Right cardiac atrium (tissue), 5 donors: ENCODE measurements at regions of chr13 and their contacts with region 1.

Region 1: GRCh38 chr13:80342471-80343380 is 1.8 kb upstream of the SPRY2 start:
- DNase-seq: peak; percentile 83 to 94 (median 94)
- ATAC-seq: peak; percentile 58 to 66
- H3K4me3 ChIP-seq: peak overlapping the region; percentile 94
- H3K27ac ChIP-seq: peak overlapping the region; percentile 99
- H3K4me1 ChIP-seq: no peaks in the 10 kb centered on the region
- H3K27me3 ChIP-seq: no peaks in the 10 kb centered on the region

Region 2: GRCh38 chr13:79679334-79679733 is 663.4 kb before region 1 on chr13:
- intact Hi-C with region 1: loop called in 2 of 4 experiments (anchors 10 kb)
- DNase-seq: peak; percentile 63 to 87 (median 65)
- ATAC-seq: peak; percentile 53 to 74
- H3K4me3 ChIP-seq: no peak overlapping the region
- H3K27ac ChIP-seq: no peak overlapping the region
- H3K4me1 ChIP-seq: no peaks in the 10 kb centered on the region
- H3K27me3 ChIP-seq: no peaks in the 10 kb centered on the region

Region 3: GRCh38 chr13:79775830-79776229 is 566.9 kb before region 1 on chr13:
- intact Hi-C with region 1: loop called in 3 of 4 experiments (anchors 5 to 10 kb)
- DNase-seq: no peak
- ATAC-seq: peak in 1 of 2 donors; percentile 56
- H3K4me3 ChIP-seq: no peak overlapping the region
- H3K27ac ChIP-seq: no peak overlapping the region
- H3K4me1 ChIP-seq: no peaks in the 10 kb centered on the region
- H3K27me3 ChIP-seq: no peaks in the 10 kb centered on the region

Region 4: GRCh38 chr13:79782541-79783205 is 560.1 kb before region 1 on chr13:
- intact Hi-C with region 1: loop called in 3 of 4 experiments (anchors 5 to 10 kb)
- DNase-seq: peak; percentile 63 to 85 (median 84)
- ATAC-seq: peak; percentile 96 to 97
- H3K4me3 ChIP-seq: no peak overlapping the region
- H3K27ac ChIP-seq: peak overlapping the region; percentile 42
- H3K4me1 ChIP-seq: peaks cover 2% of the 10 kb centered on the region
- H3K27me3 ChIP-seq: no peaks in the 10 kb centered on the region

Region 5: GRCh38 chr13:80132741-80133601 is 209.8 kb before region 1 on chr13:
- intact Hi-C with region 1: loop called (anchors 5 to 10 kb)
- DNase-seq: peak; percentile 63 to 75 (median 73)
- ATAC-seq: peak; percentile 95 to 96
- H3K4me3 ChIP-seq: peak overlapping the region; percentile 44
- H3K27ac ChIP-seq: peak overlapping the region; percentile 99
- H3K4me1 ChIP-seq: no peaks in the 10 kb centered on the region
- H3K27me3 ChIP-seq: no peaks in the 10 kb centered on the region